Activated naive CD4-positive, alpha-beta T cell treated with anti-CD3 and anti-CD28 coated beads, Interleukin-2, amount 10 ng/mL, durations not matched to agents 7 days and 5 days (primary cell): ENCODE measurements at regions of chr20 and their contacts with region 1.

Region 1: DNA sequence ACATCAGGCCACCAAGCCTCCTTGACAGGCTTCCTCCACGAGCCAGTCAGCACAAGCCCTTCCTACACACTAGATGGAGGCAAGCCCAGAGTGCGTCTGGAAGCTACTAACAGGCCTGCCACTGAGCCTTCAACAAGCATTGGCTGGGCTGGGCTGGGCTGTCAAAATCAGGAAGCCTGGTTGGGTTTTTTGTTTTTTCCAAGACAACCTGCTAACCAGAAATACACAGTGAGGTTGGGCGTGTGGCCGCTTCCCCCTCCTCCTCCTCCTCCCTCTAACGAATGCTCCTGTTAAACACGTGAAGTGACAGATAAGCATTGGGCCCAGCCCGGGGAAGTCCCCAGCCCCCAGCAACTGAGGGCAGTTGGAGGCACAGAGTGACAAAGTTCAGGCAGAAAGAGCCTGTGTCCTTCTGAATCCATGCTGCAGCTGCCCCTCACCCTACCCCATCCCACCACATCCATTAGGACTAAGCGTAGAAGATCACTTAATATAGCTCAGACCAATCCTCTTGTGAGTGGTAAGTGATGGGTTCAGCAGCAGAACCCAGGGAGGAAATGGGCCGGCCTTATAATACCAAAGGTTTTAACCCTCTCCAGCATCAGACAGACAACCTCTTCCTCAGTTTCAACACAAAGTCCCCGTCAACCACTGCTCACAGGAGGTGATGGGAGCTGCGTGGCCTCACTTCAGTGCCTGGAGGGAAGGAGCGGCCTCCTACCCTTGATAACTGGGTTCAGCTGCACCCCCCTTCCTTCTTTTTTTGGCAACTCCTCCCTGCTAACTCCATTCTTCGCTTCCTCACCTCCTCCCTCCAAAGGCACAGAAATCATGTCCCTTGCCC is 1.1 kb downstream of the NFATC2 start:
- DNase-seq: peak; percentile 92
- H3K4me3 Mint-ChIP-seq: peak overlapping the region; percentile 99
- H3K27ac Mint-ChIP-seq: peak overlapping the region; percentile 98
- H3K4me1 Mint-ChIP-seq: peaks cover 56% of the 10 kb centered on the region
- H3K27me3 Mint-ChIP-seq: peaks cover 24% of the 10 kb centered on the region

Region 2: GRCh38 chr20:51404298-51405060 is 136.9 kb before region 1 on chr20:
- CTCF ChIA-PET with region 1: interaction called, 12 read pairs
- DNase-seq: peak; percentile 85
- H3K4me3 Mint-ChIP-seq: peak overlapping the region; percentile 16
- H3K27ac Mint-ChIP-seq: peak overlapping the region; percentile 99
- H3K4me1 Mint-ChIP-seq: peaks cover 77% of the 10 kb centered on the region
- H3K27me3 Mint-ChIP-seq: no peaks in the 10 kb centered on the region

Region 3: GRCh38 chr20:51512645-51513044 is 28.8 kb before region 1 on chr20:
- CTCF ChIA-PET with region 1: interaction called, 11 read pairs
- DNase-seq: peak; percentile 58
- H3K4me3 Mint-ChIP-seq: peak overlapping the region; percentile 42
- H3K27ac Mint-ChIP-seq: peak overlapping the region; percentile 85
- H3K4me1 Mint-ChIP-seq: peaks cover 84% of the 10 kb centered on the region
- H3K27me3 Mint-ChIP-seq: no peaks in the 10 kb centered on the region

Region 4: DNA sequence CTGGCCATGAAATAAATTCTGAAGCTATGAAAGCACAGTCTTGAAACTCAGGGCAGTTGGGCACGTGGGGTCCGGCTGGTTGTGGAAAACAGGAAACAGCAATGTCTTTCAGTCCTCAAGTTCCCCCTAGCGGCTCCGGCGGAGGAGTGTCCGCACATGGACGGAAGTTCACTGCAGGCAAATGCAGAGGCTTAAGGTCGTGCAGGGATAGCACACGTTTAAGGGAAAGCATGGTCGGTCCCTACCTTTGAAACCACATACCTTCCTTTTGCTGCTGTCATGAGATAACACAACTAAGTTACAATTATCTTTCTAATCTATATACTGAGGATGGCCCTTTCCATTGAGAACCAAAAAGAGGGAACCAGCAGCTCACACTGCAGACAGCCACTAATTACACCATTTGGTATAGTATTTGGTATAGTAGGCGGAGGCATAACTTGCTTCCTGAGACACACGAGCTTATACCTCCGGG is 53.7 kb after region 1 on chr20:
- CTCF ChIA-PET with region 1: interaction called, 24 read pairs
- DNase-seq: peak; percentile 87
- H3K4me3 Mint-ChIP-seq: no peak overlapping the region
- H3K27ac Mint-ChIP-seq: peak overlapping the region; percentile 70
- H3K4me1 Mint-ChIP-seq: peaks cover 18% of the 10 kb centered on the region
- H3K27me3 Mint-ChIP-seq: peaks cover 27% of the 10 kb centered on the region

Region 5: DNA sequence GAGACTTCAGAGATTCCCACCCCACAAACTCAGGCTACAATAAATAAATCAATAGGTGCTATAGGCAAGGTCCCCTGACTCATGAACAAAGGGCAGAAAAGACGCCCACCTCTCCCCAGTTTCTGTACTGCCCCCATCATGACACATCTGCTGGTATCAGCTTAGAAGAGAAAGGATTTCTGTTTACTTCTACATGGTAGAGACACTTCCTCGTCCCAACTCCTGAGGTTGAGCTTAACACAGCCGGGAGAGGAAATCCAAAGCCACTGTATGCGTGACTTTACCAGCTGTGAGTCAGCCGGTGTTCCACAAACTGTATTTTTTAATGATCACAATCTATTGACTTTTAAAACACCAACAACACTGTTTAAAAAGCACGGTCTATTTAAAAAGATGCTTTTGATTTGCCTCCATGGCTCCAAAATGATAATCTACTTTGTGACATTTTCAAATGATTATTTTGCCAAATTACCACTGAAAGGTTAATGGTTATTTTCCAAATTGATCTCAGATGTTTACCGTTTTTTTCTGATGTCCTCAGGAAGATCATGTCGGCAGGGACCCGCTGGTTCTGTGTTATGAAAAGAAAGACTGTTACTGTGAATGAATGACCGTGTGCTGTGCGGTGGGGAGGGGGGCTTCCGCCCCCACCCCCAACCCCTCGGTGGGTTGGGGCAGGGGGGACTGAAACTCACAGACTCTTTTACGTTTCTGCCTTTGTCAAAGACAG is 154.3 kb after region 1 on chr20:
- CTCF ChIA-PET with region 1: no interaction called
- DNase-seq: no peak
- H3K4me3 Mint-ChIP-seq: no peak overlapping the region
- H3K27ac Mint-ChIP-seq: no peak overlapping the region
- H3K4me1 Mint-ChIP-seq: peaks cover 13% of the 10 kb centered on the region
- H3K27me3 Mint-ChIP-seq: peaks cover 42% of the 10 kb centered on the region

Region 6: DNA sequence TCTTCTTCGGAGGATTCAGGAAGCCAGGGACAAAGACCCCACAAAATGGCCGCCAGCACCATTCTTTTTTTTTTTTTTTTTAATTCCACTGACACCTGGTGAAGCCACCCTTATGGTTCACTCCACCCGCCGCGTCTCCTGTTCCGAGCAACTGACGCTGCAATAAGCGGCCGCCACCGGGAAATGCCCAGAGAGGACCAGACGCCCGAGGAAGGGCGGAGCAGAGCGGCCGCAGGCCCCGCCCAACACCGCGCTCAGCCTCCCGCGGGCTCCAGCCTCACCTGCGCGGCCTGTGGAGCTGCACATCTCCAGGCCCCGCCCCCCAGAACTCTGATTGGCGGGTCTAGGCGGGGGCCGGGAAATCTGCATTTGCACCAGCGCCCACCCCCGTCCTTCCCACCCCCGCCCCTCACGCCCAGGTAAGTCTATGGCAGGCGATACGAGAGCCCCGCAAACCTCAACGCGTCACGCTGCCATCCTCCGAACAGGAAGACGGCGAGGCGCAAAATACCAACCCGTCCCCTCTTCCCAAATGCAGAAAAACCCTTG is 225.7 kb after region 1 on chr20:
- CTCF ChIA-PET with region 1: no interaction called
- DNase-seq: peak; percentile 60
- H3K4me3 Mint-ChIP-seq: peak overlapping the region; percentile 25
- H3K27ac Mint-ChIP-seq: no peak overlapping the region
- H3K4me1 Mint-ChIP-seq: peaks cover 12% of the 10 kb centered on the region
- H3K27me3 Mint-ChIP-seq: peaks cover 55% of the 10 kb centered on the region